PC-9 (cell line): ENCODE measurements at regions of chr18 and their contacts with region 1.

Region 1: DNA sequence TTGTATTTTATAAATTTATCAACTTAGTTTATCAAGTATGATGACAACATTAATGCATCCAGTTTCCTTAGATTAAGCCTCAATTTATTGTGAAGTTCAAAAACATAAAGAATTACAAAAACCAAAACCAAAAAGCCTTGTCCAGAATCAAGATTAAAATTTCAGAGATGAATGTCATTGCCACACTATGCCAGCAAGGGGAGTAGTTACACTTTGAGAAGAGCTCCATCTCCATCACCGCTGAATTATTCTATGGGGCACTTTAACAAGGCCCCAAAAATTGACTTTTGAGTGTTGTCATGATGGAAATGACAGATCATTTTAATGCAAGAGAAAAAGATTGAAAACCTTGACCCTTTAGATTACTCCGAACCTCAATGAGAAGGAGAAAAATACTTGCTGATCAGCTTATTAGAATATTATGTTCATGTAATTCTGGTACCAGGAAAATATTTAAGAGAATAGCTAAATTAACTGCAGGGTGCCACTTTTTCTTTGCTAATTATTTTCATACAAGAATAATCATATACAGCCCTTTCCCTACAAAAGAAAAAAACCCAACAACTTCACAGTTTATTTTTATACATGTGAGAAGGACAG is 152.5 kb upstream of the AQP4 start:
- DNase-seq: peak in 1 of 2 experiments; percentile 2
- H3K4me3 ChIP-seq: no peak overlapping the region
- H3K27ac ChIP-seq: no peak overlapping the region
- H3K4me1 ChIP-seq: no peaks in the 10 kb centered on the region
- H3K27me3 ChIP-seq: no peaks in the 10 kb centered on the region
- CTCF ChIP-seq: peak; percentile 71

Region 2: DNA sequence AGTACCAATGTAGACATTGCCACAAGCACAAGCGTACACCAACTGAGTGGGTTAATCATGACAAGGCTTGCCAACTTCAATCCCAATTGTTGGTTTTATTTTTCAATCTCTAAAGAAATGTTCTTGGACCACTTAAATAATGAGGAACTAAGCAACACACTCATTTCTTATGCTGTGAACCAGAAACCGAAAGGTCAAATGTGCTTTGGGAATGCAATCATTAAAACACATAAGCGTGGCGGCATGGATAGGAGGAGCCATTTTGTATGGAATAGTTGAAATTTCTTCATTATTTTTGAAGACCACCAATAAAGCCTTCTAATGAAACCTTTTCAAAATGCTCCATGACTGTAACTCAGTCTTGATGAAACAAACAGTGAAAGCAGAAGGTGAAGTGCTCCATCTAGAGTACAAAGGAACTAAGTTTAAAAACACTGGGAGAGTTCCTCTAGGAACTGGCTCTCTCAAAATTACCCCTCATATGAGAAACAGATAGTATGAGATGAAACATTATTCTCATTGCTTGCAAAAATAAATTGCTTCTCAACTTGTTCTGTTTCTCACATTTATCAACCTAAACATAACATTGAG is 280.3 kb after region 1 on chr18:
- CTCF ChIA-PET with region 1: interaction called, 4 read pairs
- POLR2A ChIA-PET with region 1: no interaction called
- intact Hi-C with region 1: loop called (anchors 1 kb)
- DNase-seq: no peak
- H3K4me3 ChIP-seq: no peak overlapping the region
- H3K27ac ChIP-seq: no peak overlapping the region
- H3K4me1 ChIP-seq: no peaks in the 10 kb centered on the region
- H3K27me3 ChIP-seq: no peaks in the 10 kb centered on the region
- CTCF ChIP-seq: 0 out of 2 replicates have a peak, but pooled peaks have one; percentile 26

Region 3: DNA sequence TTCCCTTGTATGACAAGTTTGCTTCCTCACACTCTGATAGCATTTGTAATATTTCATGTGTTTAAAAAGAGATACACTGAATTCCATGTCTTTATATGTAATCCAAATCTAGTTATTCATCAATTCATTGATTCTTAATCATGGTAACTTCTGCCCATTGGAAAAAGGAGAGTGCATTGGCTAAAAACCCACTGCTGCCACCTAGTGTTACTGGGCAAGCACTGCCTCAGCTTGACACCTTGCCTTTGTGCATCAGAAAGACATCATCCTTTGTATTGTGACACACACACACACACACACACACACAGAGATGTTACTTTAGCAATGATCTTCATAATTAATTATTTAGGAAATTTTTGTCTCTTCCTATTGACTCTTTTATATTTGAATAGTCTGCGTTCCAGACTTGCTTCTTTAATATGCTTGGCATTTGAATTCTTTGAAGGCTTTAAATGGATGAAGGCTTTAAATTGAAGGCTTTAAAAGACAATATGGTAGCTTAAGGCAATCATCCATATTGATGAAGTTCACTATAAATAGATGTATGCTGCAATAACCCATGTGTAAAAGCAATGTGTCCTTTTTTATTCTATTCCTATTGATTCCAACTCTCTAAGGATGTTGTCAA is 581.3 kb after region 1 on chr18:
- CTCF ChIA-PET with region 1: no interaction called
- POLR2A ChIA-PET with region 1: no interaction called
- intact Hi-C with region 1: loop called (anchors 2 kb)
- DNase-seq: no peak
- H3K4me3 ChIP-seq: no peak overlapping the region
- H3K27ac ChIP-seq: no peak overlapping the region
- H3K4me1 ChIP-seq: no peaks in the 10 kb centered on the region
- H3K27me3 ChIP-seq: no peaks in the 10 kb centered on the region
- CTCF ChIP-seq: peak; percentile 76